ENCODE measurements at regions of chr16 and their contacts with region 1.

Region 1: GRCh38 chr16:30112197-30113030 is 923 bp downstream of the GDPD3 start:
- DNase-seq: peak; percentile 68
- H3K4me3 Mint-ChIP-seq: no peak overlapping the region
- H3K27ac Mint-ChIP-seq: peak overlapping the region; percentile 36
- H3K4me1 Mint-ChIP-seq: peaks cover 10% of the 10 kb centered on the region
- H3K27me3 Mint-ChIP-seq: no peaks in the 10 kb centered on the region

Region 2: GRCh38 chr16:30124985-30125379 is 12.6 kb after region 1 on chr16:
- CTCF ChIA-PET with region 1: interaction called, 13 read pairs
- POLR2A ChIA-PET with region 1: no interaction called
- DNase-seq: no peak
- H3K4me3 Mint-ChIP-seq: no peak overlapping the region
- H3K27ac Mint-ChIP-seq: no peak overlapping the region
- H3K4me1 Mint-ChIP-seq: peaks cover 23% of the 10 kb centered on the region
- H3K27me3 Mint-ChIP-seq: no peaks in the 10 kb centered on the region

Measured in activated CD4-positive, alpha-beta T cell treated with anti-CD3 and anti-CD28 coated beads, Interleukin-2, amount 10 ng/mL, durations not matched to agents 7 days and 5 days (primary cell).